ENCODE measurements at regions of chr11 and their contacts with region 1.

Region 1: DNA sequence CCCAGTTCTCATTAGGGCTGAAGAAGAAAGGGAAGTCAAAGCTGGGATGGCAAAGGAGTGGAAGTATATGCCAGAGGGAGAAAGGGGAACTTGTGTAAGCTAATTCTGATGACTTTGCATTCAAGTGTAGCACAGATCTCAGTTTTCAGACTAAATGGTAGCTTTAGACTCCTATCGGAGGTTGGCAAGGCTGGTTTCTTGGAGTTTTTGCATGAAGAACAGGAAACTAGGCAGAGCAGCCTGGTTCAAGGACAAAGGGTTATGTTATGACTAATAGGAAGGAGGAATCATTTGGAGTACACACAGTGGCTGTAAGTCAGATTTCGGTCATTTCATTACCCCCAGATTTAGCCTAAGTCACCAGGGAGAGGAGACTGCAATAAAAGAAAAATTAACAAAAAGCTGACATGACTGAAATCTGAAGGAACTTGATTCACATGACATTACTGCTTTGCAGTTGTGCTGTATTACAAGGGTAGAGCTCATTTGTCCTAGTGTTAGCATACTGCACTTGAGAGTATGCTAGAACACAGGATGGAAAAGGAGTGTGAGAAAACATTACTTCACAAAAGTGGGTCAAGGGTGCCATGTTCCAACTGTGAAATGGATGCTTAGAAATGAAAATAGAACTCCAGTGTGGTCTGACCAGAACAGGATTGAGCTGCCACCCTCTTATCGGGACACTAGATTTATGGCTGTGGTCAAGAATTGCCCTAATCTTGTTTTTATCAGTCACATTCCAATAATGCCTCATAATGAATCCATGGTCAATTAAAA is 23.6 kb downstream of the ADM start:
- DNase-seq: no peak
- ATAC-seq: peak in 2 of 4 donors; percentile 1 to 2
- H3K4me3 ChIP-seq: no peak overlapping the region
- H3K27ac ChIP-seq: peak overlapping the region in 2 of 3 donors; percentile 13 to 65
- H3K4me1 ChIP-seq: peaks cover 0 to 49% (median 21%) of the 10 kb centered on the region in 4 donors
- H3K27me3 ChIP-seq: no peaks in the 10 kb centered on the region
- CTCF ChIP-seq: no peak
- POLR2A ChIP-seq: no peak

Region 2: GRCh38 chr11:10366568-10367370 is 38.3 kb after region 1 on chr11:
- intact Hi-C with region 1: loop called in 1 of 2 experiments (anchors 5 kb)
- DNase-seq: peak; percentile 76 to 93 (median 86)
- ATAC-seq: peak; percentile 95 to 98 (median 98)
- H3K4me3 ChIP-seq: no peak overlapping the region
- H3K27ac ChIP-seq: peak overlapping the region in 2 of 3 donors; percentile 39 to 52
- H3K4me1 ChIP-seq: peaks cover 0 to 8% (median 3%) of the 10 kb centered on the region in 4 donors
- H3K27me3 ChIP-seq: no peaks in the 10 kb centered on the region
- CTCF ChIP-seq: peak; percentile 84 to 90 (median 88)
- POLR2A ChIP-seq: no peak